ENCODE measurements at regions of chr2 and their contacts with region 1.

Region 1: DNA sequence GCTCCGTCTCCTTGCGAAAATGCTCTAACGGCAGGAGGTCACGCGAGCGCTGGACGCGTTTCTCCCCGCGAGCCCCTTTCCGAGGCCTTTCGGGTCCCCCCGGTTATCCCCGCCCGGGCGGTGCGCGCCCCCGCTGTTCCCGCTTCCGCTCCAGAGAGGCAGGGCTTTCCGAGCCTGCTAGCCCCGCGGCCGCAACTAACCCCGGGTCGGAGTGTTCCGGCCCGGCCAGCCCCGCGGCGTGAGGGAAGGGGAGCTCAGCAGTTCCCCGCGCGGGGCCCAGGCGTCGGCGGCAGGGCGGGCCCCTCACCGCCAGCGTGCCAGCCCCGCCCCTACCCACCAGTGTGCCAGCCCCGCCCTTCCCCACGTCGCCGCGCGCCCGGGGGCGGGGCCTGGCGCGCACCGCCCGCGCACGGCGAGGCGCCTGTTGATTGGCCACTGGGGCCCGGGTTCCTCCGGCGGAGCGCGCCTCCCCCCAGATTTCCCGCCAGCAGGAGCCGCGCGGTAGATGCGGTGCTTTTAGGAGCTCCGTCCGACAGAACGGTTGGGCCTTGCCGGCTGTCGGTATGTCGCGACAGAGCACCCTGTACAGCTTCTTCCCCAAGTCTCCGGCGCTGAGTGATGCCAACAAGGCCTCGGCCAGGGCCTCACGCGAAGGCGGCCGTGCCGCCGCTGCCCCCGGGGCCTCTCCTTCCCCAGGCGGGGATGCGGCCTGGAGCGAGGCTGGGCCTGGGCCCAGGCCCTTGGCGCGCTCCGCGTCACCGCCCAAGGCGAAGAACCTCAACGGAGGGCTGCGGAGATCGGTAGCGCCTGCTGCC is at the start of gene MSH6:
- DNase-seq: peak; percentile 88
- ATAC-seq: peak; percentile 92
- H3K4me3 Mint-ChIP-seq: peak within 1 kb of the TSS; percentile 88
- H3K27ac Mint-ChIP-seq: peak within 1 kb of the TSS; percentile 91
- H3K4me1 Mint-ChIP-seq: peaks cover 16% of the 10 kb centered on the region
- H3K27me3 Mint-ChIP-seq: no peaks in the 10 kb centered on the region
- CTCF ChIP-seq: no peak
- total RNA-seq, gene MSH6: 145 to 151 TPM

Region 2: DNA sequence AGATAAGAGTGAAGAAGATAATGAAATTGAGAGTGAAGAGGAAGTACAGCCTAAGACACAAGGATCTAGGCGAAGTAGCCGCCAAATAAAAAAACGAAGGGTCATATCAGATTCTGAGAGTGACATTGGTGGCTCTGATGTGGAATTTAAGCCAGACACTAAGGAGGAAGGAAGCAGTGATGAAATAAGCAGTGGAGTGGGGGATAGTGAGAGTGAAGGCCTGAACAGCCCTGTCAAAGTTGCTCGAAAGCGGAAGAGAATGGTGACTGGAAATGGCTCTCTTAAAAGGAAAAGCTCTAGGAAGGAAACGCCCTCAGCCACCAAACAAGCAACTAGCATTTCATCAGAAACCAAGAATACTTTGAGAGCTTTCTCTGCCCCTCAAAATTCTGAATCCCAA is 15.8 kb after region 1 on chr2:
- CTCF ChIA-PET with region 1: interaction called, 5 read pairs
- POLR2A ChIA-PET with region 1: interaction called, 18 read pairs
- intact Hi-C with region 1: no loop called
- DNase-seq: no peak
- ATAC-seq: no peak
- H3K4me3 Mint-ChIP-seq: no peak overlapping the region
- H3K27ac Mint-ChIP-seq: no peak overlapping the region
- H3K4me1 Mint-ChIP-seq: no peaks in the 10 kb centered on the region
- H3K27me3 Mint-ChIP-seq: no peaks in the 10 kb centered on the region
- CTCF ChIP-seq: no peak